Activated CD8-positive, alpha-beta T cell treated with anti-CD3 and anti-CD28 coated beads for 36 hours (primary cell): ENCODE measurements at regions of chr17 and their contacts with region 1.

Region 1: DNA sequence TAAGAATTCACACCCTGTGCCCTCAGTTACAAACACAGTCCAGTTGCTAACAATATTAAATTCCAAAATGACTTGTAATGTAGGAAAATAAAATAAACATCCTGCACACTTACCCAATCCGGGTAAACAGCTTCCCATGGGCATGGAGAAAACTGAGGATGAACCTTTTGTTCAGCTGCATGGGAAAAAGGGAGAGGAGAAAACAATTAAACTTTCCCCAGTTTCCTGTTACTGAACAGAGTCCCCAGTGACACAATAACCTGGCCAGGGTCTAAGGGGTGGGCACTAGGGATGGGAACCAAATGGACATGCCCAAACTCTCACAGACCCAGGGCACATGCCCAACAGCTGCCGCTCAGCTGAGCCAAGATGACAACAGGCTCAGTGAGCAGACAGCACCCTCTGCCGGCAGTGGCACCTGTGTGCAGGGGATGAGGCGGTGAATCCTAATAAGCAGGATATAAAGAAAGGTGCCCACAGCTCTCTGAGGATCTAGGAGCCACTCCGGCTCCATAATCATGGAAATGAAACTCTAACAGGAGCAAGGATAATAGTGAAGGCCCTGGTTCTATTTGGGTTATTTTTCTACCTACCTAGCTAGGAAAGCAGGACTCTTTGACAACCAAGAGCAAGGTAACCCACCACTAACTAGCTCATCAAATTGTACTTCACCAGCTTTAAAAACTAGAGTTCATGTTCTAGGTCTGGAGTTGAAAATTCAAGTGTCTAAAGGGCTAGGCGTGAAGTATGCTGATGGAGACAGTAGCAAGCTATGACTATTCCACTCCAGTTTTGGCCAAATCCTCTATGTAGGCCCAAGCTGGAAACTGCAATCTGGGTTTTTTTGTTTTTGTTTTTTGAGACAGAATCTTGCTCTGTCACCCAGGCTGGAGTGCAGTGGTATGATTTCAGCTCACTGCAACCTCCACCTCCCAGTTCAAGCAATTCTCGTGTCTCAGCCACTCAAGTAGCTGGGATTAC is 58.8 kb downstream of the SMG6 start:
- DNase-seq: peak; percentile 90
- ATAC-seq: peak; percentile 93
- H3K4me3 Mint-ChIP-seq: no peak overlapping the region
- H3K27ac Mint-ChIP-seq: peak overlapping the region; percentile 60
- H3K4me1 Mint-ChIP-seq: peaks cover 51% of the 10 kb centered on the region
- H3K27me3 Mint-ChIP-seq: no peaks in the 10 kb centered on the region
- CTCF ChIP-seq: peak; percentile 98

Region 2: GRCh38 chr17:2054512-2055291 is 190.1 kb before region 1 on chr17 and contains the start of gene HIC1:
- CTCF ChIA-PET with region 1: interaction called, 239 read pairs
- POLR2A ChIA-PET with region 1: interaction called, 31 read pairs
- intact Hi-C with region 1: loop called (anchors 5 kb)
- DNase-seq: peak; percentile 84
- ATAC-seq: peak; percentile 52
- H3K4me3 Mint-ChIP-seq: peak within 1 kb of the TSS; percentile 74
- H3K27ac Mint-ChIP-seq: peak within 1 kb of the TSS; percentile 52
- H3K4me1 Mint-ChIP-seq: peaks cover 16% of the 10 kb centered on the region
- H3K27me3 Mint-ChIP-seq: peaks cover 9% of the 10 kb centered on the region
- CTCF ChIP-seq: peak; percentile 97
- total RNA-seq, gene HIC1: 35.1 TPM

Region 3: DNA sequence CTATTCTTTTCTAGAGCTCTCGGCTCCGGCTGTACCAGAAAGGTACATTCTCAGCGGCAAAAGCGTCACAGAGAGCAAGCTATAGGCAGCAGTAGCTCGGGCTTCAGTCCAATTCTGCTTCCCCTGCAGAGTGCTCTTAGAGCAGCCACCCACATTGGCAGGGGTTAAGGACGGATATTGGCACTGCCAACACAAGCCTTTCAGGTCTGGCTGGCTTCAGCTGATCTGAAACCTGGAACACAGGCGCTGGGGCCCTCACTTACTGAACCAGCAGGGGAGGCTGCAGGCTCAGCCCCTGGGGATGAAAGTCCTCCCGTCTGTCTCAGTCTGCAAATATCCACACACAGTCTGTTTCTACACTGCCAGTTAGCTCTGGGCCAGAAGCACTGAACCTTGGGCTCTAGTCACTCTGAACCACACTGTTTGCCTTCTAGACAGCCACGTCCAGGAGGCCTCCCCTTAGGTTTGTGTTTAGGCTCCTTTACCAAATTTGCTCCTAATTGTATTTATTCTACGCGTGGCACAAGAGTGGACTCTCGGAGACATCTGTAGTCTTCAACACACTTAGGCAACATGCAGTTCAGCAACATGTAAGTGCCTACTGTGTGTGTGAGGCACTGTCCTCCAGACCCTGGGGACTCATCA is 149.8 kb before region 1 on chr17:
- CTCF ChIA-PET with region 1: interaction called, 25 read pairs
- POLR2A ChIA-PET with region 1: no interaction called
- intact Hi-C with region 1: no loop called
- DNase-seq: no peak
- ATAC-seq: peak; percentile 22
- H3K4me3 Mint-ChIP-seq: no peak overlapping the region
- H3K27ac Mint-ChIP-seq: no peak overlapping the region
- H3K4me1 Mint-ChIP-seq: peaks cover 18% of the 10 kb centered on the region
- H3K27me3 Mint-ChIP-seq: no peaks in the 10 kb centered on the region
- CTCF ChIP-seq: no peak

Region 4: GRCh38 chr17:2172077-2172851 is 72.6 kb before region 1 on chr17:
- CTCF ChIA-PET with region 1: interaction called, 15 read pairs
- POLR2A ChIA-PET with region 1: no interaction called
- intact Hi-C with region 1: no loop called
- DNase-seq: no peak
- ATAC-seq: no peak
- H3K4me3 Mint-ChIP-seq: no peak overlapping the region
- H3K27ac Mint-ChIP-seq: no peak overlapping the region
- H3K4me1 Mint-ChIP-seq: peaks cover 5% of the 10 kb centered on the region
- H3K27me3 Mint-ChIP-seq: no peaks in the 10 kb centered on the region
- CTCF ChIP-seq: no peak

Region 5: DNA sequence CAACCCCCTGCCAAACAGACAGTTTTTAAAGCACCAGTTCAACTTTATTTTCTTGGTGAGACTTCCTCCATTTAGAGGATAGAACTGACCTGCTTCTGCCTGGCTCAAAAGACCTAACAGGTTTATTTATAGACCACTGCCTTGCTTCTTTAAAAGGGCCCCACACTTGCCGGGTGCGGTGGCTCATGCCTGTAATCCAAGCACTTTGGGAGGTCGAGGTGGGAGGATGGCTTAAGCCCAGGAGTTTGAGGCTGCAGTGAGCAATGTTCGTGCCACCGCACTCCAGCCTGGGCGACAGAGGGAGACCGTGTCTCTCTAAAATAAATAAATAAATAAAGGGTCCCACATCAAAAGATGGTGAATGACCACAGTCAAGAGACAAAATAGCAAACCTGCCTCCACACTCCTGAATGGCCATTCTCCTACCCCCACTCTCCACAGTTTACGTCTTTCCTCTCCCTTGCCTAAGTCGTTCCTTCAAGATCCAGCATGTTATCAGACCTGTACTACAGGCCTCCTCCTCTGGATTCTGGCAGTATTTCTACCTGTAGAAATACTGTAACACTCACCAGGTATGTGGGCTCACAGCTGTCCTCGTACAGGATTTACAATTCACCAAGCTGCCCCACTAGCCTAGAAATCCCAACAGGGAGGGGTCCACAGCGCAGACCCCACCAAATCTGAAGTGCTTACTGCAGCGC is 36.9 kb before region 1 on chr17:
- CTCF ChIA-PET with region 1: interaction called, 35 read pairs
- POLR2A ChIA-PET with region 1: no interaction called
- intact Hi-C with region 1: no loop called
- DNase-seq: no peak
- ATAC-seq: no peak
- H3K4me3 Mint-ChIP-seq: no peak overlapping the region
- H3K27ac Mint-ChIP-seq: no peak overlapping the region
- H3K4me1 Mint-ChIP-seq: peaks cover 21% of the 10 kb centered on the region
- H3K27me3 Mint-ChIP-seq: no peaks in the 10 kb centered on the region
- CTCF ChIP-seq: no peak

Region 6: DNA sequence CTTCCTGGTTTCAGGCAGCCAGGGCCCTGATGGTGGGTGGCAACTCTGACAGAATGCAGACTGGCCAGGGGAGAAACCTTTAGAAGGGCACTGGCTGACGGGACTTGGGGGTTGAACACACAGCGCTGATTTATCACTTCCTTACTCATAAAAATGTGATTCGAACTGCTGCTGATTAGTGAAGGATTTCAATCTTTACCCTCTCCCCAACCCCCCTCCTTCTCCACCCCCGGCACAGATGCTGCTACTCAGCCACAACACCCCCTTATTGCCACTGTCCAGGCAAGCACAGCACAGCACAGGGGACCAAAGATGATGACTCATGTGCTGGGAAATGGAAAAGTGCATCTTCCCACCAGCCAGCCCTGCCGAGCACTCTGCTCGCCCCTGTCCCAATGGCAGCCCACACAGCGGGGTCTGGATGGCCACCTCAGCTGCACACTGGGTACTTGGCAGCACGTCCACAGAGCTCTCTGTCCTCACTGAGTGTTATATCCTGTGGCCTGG is 11.3 kb before region 1 on chr17:
- CTCF ChIA-PET with region 1: interaction called, 33 read pairs
- POLR2A ChIA-PET with region 1: interaction called, 4 read pairs
- intact Hi-C with region 1: no loop called
- DNase-seq: no peak
- ATAC-seq: peak; percentile 18
- H3K4me3 Mint-ChIP-seq: no peak overlapping the region
- H3K27ac Mint-ChIP-seq: no peak overlapping the region
- H3K4me1 Mint-ChIP-seq: peaks cover 34% of the 10 kb centered on the region
- H3K27me3 Mint-ChIP-seq: no peaks in the 10 kb centered on the region
- CTCF ChIP-seq: no peak

Region 7: DNA sequence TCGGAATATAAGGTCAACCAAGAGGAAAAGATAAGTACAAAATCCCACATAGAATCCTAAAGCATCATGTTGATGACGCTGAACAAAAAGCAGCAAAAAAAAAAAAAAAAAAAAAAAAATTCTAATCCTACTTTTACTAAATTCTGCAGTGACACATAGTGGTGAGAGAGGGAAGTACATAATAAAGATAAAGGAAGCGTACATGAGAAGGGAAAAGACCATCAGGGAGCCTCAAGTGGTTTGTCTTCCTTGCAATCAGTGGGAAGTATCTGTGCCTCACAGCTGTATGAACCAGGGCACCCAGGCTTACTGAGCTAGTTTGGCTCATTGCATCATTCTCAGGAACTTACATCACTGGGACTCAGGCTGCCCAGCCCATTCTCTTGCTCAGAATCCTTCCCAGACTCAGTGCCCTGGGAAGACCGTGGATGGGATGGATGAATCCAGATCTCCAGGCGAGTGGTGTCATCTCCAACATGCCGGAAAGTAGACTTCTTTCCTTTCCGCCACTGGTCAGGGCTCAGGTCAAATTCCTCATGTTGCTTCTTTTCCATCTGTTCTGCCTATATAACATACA is 37.5 kb after region 1 on chr17:
- CTCF ChIA-PET with region 1: interaction called, 96 read pairs
- POLR2A ChIA-PET with region 1: interaction called, 7 read pairs
- intact Hi-C with region 1: no loop called
- DNase-seq: no peak
- ATAC-seq: peak; percentile 81
- H3K4me3 Mint-ChIP-seq: no peak overlapping the region
- H3K27ac Mint-ChIP-seq: peak overlapping the region; percentile 77
- H3K4me1 Mint-ChIP-seq: peaks cover 33% of the 10 kb centered on the region
- H3K27me3 Mint-ChIP-seq: no peaks in the 10 kb centered on the region
- CTCF ChIP-seq: peak; percentile 73